ENCODE measurements at regions of chr5 and their contacts with region 1.

Region 1: GRCh38 chr5:59810041-59810440 is 83.5 kb downstream of the PDE4D start:
- DNase-seq: peak; percentile 70 to 81
- ATAC-seq: peak; percentile 48 to 84 (median 64)
- H3K4me3 ChIP-seq: peak overlapping the region; percentile 21
- H3K27ac ChIP-seq: no peak overlapping the region
- H3K4me1 ChIP-seq: no peaks in the 10 kb centered on the region
- H3K27me3 ChIP-seq: no peaks in the 10 kb centered on the region
- CTCF ChIP-seq: peak; percentile 92

Region 2: DNA sequence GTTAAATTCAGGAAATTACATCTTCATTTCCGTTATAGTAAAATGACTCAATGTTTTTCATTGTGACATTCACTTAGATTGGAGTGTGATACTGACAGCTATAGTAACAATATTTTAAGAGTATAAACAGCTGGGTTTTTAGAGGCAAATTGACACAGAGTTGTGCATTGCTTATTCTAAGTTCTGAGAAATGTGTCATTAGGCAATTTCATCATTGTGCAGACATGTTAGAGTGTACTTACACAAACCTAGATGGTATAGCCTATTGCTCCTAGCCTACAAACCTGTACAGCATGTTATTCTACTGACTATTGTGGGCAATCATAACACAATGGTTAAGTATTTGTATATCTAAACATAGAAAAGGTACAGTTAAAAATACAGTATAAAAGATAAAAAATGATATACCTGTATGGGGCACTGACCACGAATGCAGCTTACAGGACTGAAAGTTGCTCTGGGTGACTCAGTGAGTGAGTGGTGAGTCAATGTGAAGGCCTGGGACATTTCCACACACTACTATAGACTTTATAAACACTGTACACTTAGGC is 49.2 kb before region 1 on chr5:
- intact Hi-C with region 1: no loop called
- DNase-seq: no peak
- ATAC-seq: no peak
- H3K4me3 ChIP-seq: no peak overlapping the region
- H3K27ac ChIP-seq: no peak overlapping the region
- H3K4me1 ChIP-seq: no peaks in the 10 kb centered on the region
- H3K27me3 ChIP-seq: peaks cover 0 to 3% (median 0%) of the 10 kb centered on the region in 3 donors
- CTCF ChIP-seq: no peak

Region 3: DNA sequence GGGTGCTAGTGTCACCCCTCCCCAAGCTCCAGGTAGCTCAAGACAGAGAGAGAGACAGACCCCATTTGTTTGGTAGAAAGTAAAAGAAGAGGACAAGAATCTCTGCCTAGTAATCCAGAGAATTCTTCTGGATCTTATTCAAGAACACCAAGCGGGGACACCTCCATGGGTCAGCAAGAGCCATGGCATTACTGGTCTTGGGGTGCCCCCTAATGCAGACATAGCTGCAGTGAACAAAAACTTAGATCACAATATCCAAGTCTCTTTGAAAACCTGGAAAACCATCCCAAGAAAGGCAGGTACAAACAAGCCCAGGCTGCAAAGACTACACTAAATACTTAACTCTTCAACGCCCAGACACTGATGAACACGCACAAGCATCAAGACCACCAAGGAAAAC is 113.4 kb after region 1 on chr5:
- intact Hi-C with region 1: loop called in 1 of 2 experiments (anchors 5 kb)
- DNase-seq: no peak
- ATAC-seq: no peak
- H3K4me3 ChIP-seq: no peak overlapping the region
- H3K27ac ChIP-seq: no peak overlapping the region
- H3K4me1 ChIP-seq: no peaks in the 10 kb centered on the region
- H3K27me3 ChIP-seq: no peaks in the 10 kb centered on the region
- CTCF ChIP-seq: peak; percentile 15

Region 4: GRCh38 chr5:60649283-60649917 is 839.4 kb after region 1 on chr5:
- intact Hi-C with region 1: no loop called
- DNase-seq: no peak
- ATAC-seq: no peak
- H3K4me3 ChIP-seq: no peak overlapping the region
- H3K27ac ChIP-seq: no peak overlapping the region
- H3K4me1 ChIP-seq: no peaks in the 10 kb centered on the region
- H3K27me3 ChIP-seq: no peaks in the 10 kb centered on the region
- CTCF ChIP-seq: peak; percentile 24

Region 5: GRCh38 chr5:60668686-60669304 is 858.8 kb after region 1 on chr5:
- intact Hi-C with region 1: loop called (anchors 2 to 5 kb)
- DNase-seq: no peak
- ATAC-seq: no peak
- H3K4me3 ChIP-seq: no peak overlapping the region
- H3K27ac ChIP-seq: no peak overlapping the region
- H3K4me1 ChIP-seq: no peaks in the 10 kb centered on the region
- H3K27me3 ChIP-seq: no peaks in the 10 kb centered on the region
- CTCF ChIP-seq: peak; percentile 54